Heart left ventricle (tissue), 16 donors: ENCODE measurements at regions of chr12 and their contacts with region 1.

Region 1: GRCh38 chr12:28872654-28873268 is 276.3 kb upstream of the FAR2 start:
- DNase-seq: peak in 4 of 5 donors; percentile 25 to 47 (median 44)
- ATAC-seq: peak in 3 of 4 donors; percentile 72 to 82 (median 74)
- H3K4me3 ChIP-seq: no peak overlapping the region
- H3K27ac ChIP-seq: peak overlapping the region in 1 of 12 donors; percentile 4
- H3K4me1 ChIP-seq: peaks cover 0 to 4% (median 0%) of the 10 kb centered on the region in 12 donors
- H3K27me3 ChIP-seq: peaks cover 0 to 5% (median 0%) of the 10 kb centered on the region in 9 donors
- CTCF ChIP-seq: peak; percentile 44 to 81 (median 72)
- POLR2A ChIP-seq: no peak

Region 2: DNA sequence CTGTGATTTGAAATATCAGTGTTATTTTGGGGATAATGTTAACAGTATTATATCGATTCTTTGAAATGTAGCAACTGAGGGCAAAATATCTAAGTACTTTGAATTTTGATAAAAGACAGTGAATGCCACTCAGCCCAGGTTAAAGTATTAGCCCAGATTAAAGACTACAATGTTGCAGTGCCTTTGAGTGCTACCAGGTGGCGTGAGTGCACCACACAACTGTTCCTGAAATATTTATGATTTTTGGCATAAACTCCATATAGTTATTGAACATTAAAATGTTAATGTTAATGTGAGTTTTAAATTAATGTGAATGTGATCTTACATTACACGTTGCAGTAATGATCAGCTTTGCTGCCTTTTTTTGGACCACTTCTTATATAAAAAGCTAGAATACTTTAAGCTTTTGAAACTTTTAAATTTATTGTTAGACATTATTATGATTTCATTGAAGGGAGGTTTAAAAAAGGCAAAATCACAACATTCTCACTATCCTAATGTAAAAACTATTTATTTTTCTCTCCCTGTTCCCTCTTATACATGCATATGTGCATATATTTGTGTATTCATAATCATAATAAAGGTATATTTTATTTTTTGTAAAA is 1139.6 kb before region 1 on chr12:
- intact Hi-C with region 1: loop called in 7 of 10 experiments (anchors 5 to 10 kb)
- DNase-seq: no peak
- ATAC-seq: peak in 3 of 4 donors; percentile 37 to 64 (median 48)
- H3K4me3 ChIP-seq: no peak overlapping the region
- H3K27ac ChIP-seq: no peak overlapping the region
- H3K4me1 ChIP-seq: no peaks in the 10 kb centered on the region
- H3K27me3 ChIP-seq: no peaks in the 10 kb centered on the region
- CTCF ChIP-seq: peak; percentile 34 to 87 (median 73)
- POLR2A ChIP-seq: no peak

Region 3: DNA sequence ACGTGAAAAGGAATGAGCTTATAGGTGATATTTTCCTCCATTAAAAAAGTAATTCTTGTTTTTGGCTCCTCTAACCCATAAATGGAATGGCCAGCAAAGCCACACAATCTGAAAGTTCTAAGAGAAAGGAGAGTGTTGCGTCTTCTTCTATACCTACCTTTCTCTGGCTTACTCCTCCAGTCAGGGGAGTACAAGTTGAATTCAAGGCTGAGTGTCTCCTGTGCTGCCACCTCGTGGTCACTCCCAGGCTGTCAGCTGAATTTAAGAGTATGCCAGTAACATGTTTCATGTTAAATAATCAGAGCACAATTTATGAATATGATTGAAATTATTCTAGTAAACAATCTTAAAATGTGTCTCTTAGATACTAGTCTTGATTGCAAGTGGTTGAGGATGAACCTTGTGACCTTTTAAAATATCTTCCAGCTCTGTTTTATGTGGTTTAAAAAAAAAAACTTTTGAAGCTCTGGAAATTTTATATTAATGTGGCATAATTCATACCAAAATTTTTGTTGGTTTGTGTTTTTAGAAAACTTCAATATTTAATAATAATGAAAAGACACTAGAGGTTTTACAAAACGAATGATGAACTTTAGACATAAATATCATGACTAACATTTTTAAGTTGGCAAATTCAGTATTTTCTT is 931.9 kb before region 1 on chr12:
- intact Hi-C with region 1: loop called in 2 of 10 experiments (anchors 10 kb)
- DNase-seq: peak; percentile 53 to 66 (median 62)
- ATAC-seq: peak in 3 of 4 donors; percentile 50 to 84 (median 73)
- H3K4me3 ChIP-seq: no peak overlapping the region
- H3K27ac ChIP-seq: no peak overlapping the region
- H3K4me1 ChIP-seq: no peaks in the 10 kb centered on the region
- H3K27me3 ChIP-seq: no peaks in the 10 kb centered on the region
- CTCF ChIP-seq: peak; percentile 65 to 86 (median 78)
- POLR2A ChIP-seq: no peak

Region 4: GRCh38 chr12:27969624-27970400 is 902.9 kb before region 1 on chr12:
- intact Hi-C with region 1: loop called in 4 of 10 experiments (anchors 10 kb)
- DNase-seq: peak; percentile 32 to 65 (median 50)
- ATAC-seq: peak in 3 of 4 donors; percentile 54 to 57 (median 57)
- H3K4me3 ChIP-seq: peak overlapping the region; percentile 34 to 66 (median 54)
- H3K27ac ChIP-seq: peak overlapping the region in 5 of 12 donors; percentile 25 to 60 (median 57)
- H3K4me1 ChIP-seq: peaks cover 0 to 27% (median 14%) of the 10 kb centered on the region in 12 donors
- H3K27me3 ChIP-seq: peaks cover 13 to 84% (median 60%) of the 10 kb centered on the region in 9 donors
- CTCF ChIP-seq: peak in 1 of 12 donors; percentile 37
- POLR2A ChIP-seq: no peak

Region 5: DNA sequence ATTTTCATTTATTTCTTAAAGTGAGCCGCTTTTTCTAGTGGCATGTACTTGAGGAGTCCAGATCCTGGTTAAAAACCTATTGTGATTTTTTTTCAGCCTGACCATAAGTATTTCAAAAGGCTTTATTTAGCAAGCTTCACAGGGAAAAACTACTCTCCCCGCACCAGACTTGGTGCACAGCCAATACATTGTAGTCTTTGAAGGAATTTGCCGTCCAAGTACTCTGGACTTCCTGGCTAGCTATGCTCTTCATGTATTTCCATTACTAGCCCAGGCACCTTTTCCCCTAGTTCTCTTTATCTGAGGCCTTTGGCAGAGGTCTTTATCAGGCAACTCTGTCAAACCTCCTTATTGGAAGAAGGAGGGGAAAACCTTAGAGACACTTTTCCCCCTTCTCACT is 447.8 kb before region 1 on chr12:
- intact Hi-C with region 1: loop called in 1 of 10 experiments (anchors 10 kb)
- DNase-seq: peak; percentile 22 to 70 (median 36)
- ATAC-seq: peak; percentile 37 to 91 (median 72)
- H3K4me3 ChIP-seq: no peak overlapping the region
- H3K27ac ChIP-seq: peak overlapping the region in 5 of 12 donors; percentile 6 to 38 (median 32)
- H3K4me1 ChIP-seq: peaks cover 0 to 16% (median 4%) of the 10 kb centered on the region in 12 donors
- H3K27me3 ChIP-seq: no peaks in the 10 kb centered on the region
- CTCF ChIP-seq: no peak
- POLR2A ChIP-seq: no peak

Region 6: GRCh38 chr12:28460420-28461130 is 412.2 kb before region 1 on chr12:
- intact Hi-C with region 1: loop called in 1 of 10 experiments (anchors 10 kb)
- DNase-seq: no peak
- ATAC-seq: no peak
- H3K4me3 ChIP-seq: no peak overlapping the region
- H3K27ac ChIP-seq: no peak overlapping the region
- H3K4me1 ChIP-seq: peaks cover 0 to 13% (median 0%) of the 10 kb centered on the region in 12 donors
- H3K27me3 ChIP-seq: no peaks in the 10 kb centered on the region
- CTCF ChIP-seq: no peak
- POLR2A ChIP-seq: no peak

Region 7: GRCh38 chr12:28998637-28999120 is 125.9 kb after region 1 on chr12:
- intact Hi-C with region 1: loop called in 1 of 10 experiments (anchors 5 kb)
- DNase-seq: no peak
- ATAC-seq: peak in 1 of 4 donors; percentile 33
- H3K4me3 ChIP-seq: no peak overlapping the region
- H3K27ac ChIP-seq: no peak overlapping the region
- H3K4me1 ChIP-seq: peaks cover 0 to 5% (median 0%) of the 10 kb centered on the region in 12 donors
- H3K27me3 ChIP-seq: no peaks in the 10 kb centered on the region
- CTCF ChIP-seq: peak; percentile 13 to 66 (median 45)
- POLR2A ChIP-seq: no peak

Region 8: DNA sequence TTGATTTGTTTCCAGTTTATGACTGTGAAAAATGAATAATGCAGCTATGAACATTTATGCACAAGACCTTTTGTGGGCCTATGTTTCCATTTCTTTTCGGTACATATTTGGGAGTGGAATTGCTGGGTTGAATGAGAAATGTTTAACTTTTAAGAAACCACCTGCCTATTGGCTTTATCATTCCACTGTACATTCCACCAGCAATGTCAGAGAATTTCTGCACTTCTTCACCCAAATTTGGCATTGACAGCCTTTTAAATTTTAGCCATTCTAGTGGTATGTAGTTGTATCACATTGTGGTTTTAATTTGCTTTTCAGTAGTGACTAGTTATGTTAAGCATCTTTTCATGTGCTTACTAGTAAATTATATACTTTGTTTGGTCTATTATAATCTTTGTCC is 1228.0 kb after region 1 on chr12:
- intact Hi-C with region 1: no loop called
- DNase-seq: no peak
- ATAC-seq: no peak
- H3K4me3 ChIP-seq: no peak overlapping the region
- H3K27ac ChIP-seq: no peak overlapping the region
- H3K4me1 ChIP-seq: no peaks in the 10 kb centered on the region
- H3K27me3 ChIP-seq: no peaks in the 10 kb centered on the region
- CTCF ChIP-seq: no peak
- POLR2A ChIP-seq: no peak